ENCODE measurements at regions of chr9 and their contacts with region 1.

Region 1: DNA sequence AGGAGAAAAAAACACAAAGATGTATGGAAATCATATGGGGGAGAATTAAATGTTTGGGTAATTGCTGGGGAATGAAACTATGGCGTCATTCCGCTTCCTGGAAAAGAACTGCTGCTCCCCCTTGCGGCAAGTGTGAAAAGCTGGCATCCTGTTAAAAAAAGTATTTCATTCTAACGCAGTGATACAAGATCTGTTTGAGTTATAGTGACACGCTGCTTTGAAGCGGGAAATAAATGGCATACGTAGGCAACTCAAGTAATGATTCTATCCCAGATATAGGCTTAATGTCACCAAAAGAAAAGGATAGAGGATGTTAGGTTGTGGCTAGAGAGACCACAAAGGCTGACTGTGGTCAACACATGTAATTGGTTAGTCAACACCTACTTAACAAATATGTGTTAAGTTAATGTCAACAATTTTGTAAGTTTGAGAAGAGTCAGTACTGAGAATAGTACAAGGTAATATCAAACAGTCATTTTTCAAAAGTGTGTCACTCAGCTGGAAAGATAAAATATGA is 70.2 kb upstream of the ALDH1A1 start:
- DNase-seq: peak; percentile 32 to 62 (median 49)
- ATAC-seq: peak; percentile 55 to 60
- H3K4me3 ChIP-seq: no peak overlapping the region
- H3K27ac ChIP-seq: no peak overlapping the region
- H3K4me1 ChIP-seq: no peaks in the 10 kb centered on the region
- H3K27me3 ChIP-seq: no peaks in the 10 kb centered on the region

Region 2: DNA sequence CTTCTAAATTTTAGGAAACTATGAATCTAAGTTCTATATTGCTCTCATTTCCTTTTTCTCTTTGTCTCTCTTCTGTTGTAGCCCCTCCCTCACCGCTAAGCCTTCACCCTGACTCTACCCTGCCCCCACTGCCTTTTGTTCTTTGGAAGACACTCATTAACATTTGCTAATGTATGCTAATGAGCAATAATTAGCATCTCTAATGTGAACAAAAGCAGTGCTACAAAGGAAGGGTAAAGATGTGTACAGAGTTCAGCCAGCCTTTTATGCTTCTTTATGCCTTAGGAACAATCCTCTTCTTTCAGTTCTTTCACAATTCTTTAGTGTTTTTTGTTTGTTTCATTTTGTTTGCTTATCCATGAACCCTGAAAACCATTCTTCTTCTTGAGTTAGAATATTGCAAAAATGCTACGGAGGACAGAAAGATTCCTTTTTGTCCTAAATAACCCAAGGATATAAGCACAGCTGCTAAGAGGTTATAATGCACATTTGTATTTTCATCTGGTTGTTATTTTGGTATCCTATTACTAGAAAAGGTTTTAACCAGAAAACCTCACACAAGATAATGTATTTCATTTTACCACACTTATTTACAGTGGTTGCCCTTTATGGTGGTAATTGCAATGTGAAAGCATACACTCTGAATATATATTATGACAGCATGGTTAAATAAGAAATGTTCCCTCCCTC is 342.3 kb before region 1 on chr9:
- intact Hi-C with region 1: no loop called
- DNase-seq: no peak
- ATAC-seq: no peak
- H3K4me3 ChIP-seq: no peak overlapping the region
- H3K27ac ChIP-seq: no peak overlapping the region
- H3K4me1 ChIP-seq: no peaks in the 10 kb centered on the region
- H3K27me3 ChIP-seq: no peaks in the 10 kb centered on the region

Region 3: GRCh38 chr9:72856972-72857623 is 166.0 kb before region 1 on chr9:
- intact Hi-C with region 1: loop called (anchors 5 kb)
- DNase-seq: no peak
- ATAC-seq: peak; percentile 67 to 78
- H3K4me3 ChIP-seq: no peak overlapping the region
- H3K27ac ChIP-seq: no peak overlapping the region
- H3K4me1 ChIP-seq: peaks cover 7% of the 10 kb centered on the region
- H3K27me3 ChIP-seq: no peaks in the 10 kb centered on the region

Region 4: GRCh38 chr9:72871685-72872084 is 151.4 kb before region 1 on chr9:
- intact Hi-C with region 1: loop called in 1 of 4 experiments (anchors 5 kb)
- DNase-seq: no peak
- ATAC-seq: no peak
- H3K4me3 ChIP-seq: no peak overlapping the region
- H3K27ac ChIP-seq: no peak overlapping the region
- H3K4me1 ChIP-seq: peaks cover 3% of the 10 kb centered on the region
- H3K27me3 ChIP-seq: no peaks in the 10 kb centered on the region

Region 5: GRCh38 chr9:72971411-72971810 is 51.7 kb before region 1 on chr9:
- intact Hi-C with region 1: no loop called
- DNase-seq: no peak
- ATAC-seq: no peak
- H3K4me3 ChIP-seq: no peak overlapping the region
- H3K27ac ChIP-seq: no peak overlapping the region
- H3K4me1 ChIP-seq: no peaks in the 10 kb centered on the region
- H3K27me3 ChIP-seq: no peaks in the 10 kb centered on the region

Region 6: DNA sequence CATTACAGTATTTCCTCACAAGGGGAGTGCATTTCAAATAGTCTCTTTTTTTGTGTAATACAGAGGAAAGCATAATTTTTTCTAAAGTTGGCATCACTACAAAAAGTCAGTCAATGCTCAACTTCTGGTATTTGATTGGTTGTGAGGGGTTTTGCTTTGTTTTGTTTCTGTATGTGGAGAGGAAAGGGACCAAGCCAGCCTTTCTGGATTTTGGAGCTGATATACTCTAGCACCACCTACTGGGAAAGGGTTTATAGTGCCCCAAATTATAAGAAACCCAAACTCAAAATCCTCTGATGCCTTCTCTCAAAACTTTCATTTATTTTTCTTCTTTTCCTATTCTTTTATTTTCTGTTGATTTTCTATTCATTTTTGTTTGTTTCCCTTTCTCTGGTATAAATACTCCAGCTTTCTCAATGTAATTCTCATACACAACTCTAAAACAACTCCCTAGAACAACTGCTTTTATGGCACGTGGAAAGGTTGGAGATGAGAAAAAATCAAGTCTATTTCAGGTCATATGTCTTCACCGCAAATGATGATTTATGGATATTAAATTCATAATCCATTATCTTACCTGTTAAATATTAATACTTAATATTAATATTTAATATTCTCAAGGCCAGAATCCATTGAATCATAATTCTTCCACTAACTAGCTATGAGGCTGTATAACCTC is 59.0 kb after region 1 on chr9:
- intact Hi-C with region 1: loop called in 1 of 4 experiments (anchors 10 kb)
- DNase-seq: no peak
- ATAC-seq: peak in 1 of 2 donors; percentile 57
- H3K4me3 ChIP-seq: no peak overlapping the region
- H3K27ac ChIP-seq: no peak overlapping the region
- H3K4me1 ChIP-seq: no peaks in the 10 kb centered on the region
- H3K27me3 ChIP-seq: no peaks in the 10 kb centered on the region